Dorsolateral prefrontal cortex (tissue), 120 donors: ENCODE measurements at regions of chr14 and their contacts with region 1.

Region 1: GRCh38 chr14:22822571-22823098 is 7.1 kb upstream of the MRPL52 start:
- DNase-seq: peak in 9 of 10 donors; percentile 42 to 80 (median 58)
- H3K4me3 ChIP-seq: peak overlapping the region; percentile 5 to 71 (median 48)
- H3K27ac ChIP-seq: peak overlapping the region in 13 of 59 donors; percentile 12 to 52 (median 40)
- H3K27me3 ChIP-seq: peaks cover 0 to 22% (median 0%) of the 10 kb centered on the region in 45 donors
- CTCF ChIP-seq: peak; percentile 36 to 97 (median 82)

Region 2: DNA sequence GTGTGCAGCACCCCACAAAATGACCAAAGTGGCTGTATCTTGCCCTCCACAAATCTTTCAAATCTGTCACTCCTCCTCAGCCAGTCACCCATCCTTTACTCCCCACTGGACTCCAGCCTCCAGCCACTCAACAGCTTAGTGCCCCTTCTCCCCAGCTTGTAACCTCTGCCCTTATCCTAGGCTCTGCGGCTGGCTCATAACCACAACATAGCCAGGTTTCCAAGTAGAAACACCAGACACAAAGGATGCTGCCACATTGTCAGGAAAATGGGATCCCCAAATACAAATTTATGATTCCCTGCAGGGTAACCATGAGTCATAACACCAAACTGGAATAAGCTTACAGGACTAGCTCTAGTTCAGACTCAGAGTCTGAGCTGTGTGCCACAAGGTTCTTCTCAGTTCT is 41.0 kb before region 1 on chr14:
- intact Hi-C with region 1: loop called in 1 of 2 experiments (anchors 5 kb)
- DNase-seq: no peak
- H3K4me3 ChIP-seq: no peak overlapping the region
- H3K27ac ChIP-seq: no peak overlapping the region
- H3K27me3 ChIP-seq: no peaks in the 10 kb centered on the region
- CTCF ChIP-seq: no peak